ENCODE measurements at regions of chr6 and their contacts with region 1.

Region 1: GRCh38 chr6:89610149-89610642 is 28.4 kb downstream of the LYRM2 start:
- DNase-seq: peak; percentile 83
- ATAC-seq: peak; percentile 88
- H3K4me3 Mint-ChIP-seq: no peak overlapping the region
- H3K27ac Mint-ChIP-seq: no peak overlapping the region
- H3K4me1 Mint-ChIP-seq: peaks cover 22% of the 10 kb centered on the region
- H3K27me3 Mint-ChIP-seq: no peaks in the 10 kb centered on the region

Region 2: GRCh38 chr6:89559487-89559886 is 50.7 kb before region 1 on chr6:
- CTCF ChIA-PET with region 1: no interaction called
- DNase-seq: no peak
- ATAC-seq: no peak
- H3K4me3 Mint-ChIP-seq: no peak overlapping the region
- H3K27ac Mint-ChIP-seq: no peak overlapping the region
- H3K4me1 Mint-ChIP-seq: no peaks in the 10 kb centered on the region
- H3K27me3 Mint-ChIP-seq: peaks cover 24% of the 10 kb centered on the region

Region 3: GRCh38 chr6:89597988-89598692 is 12.1 kb before region 1 on chr6:
- CTCF ChIA-PET with region 1: interaction called, 15 read pairs
- DNase-seq: no peak
- ATAC-seq: peak; percentile 28
- H3K4me3 Mint-ChIP-seq: no peak overlapping the region
- H3K27ac Mint-ChIP-seq: no peak overlapping the region
- H3K4me1 Mint-ChIP-seq: peaks cover 40% of the 10 kb centered on the region
- H3K27me3 Mint-ChIP-seq: no peaks in the 10 kb centered on the region